ENCODE measurements at regions of chr10 and their contacts with region 1.

Region 1: GRCh38 chr10:4498711-4499251 is 327.2 kb upstream of the AKR1E2 start:
- DNase-seq: peak in 1 of 2 donors; percentile 23
- ATAC-seq: peak; percentile 77 to 93 (median 90)
- H3K4me3 ChIP-seq: no peak overlapping the region
- H3K27ac ChIP-seq: peak overlapping the region; percentile 14 to 90 (median 78)
- H3K4me1 ChIP-seq: peaks cover 5 to 24% (median 14%) of the 10 kb centered on the region in 9 donors
- H3K27me3 ChIP-seq: no peaks in the 10 kb centered on the region
- CTCF ChIP-seq: no peak

Region 2: GRCh38 chr10:4344511-4344994 is 154.2 kb before region 1 on chr10:
- intact Hi-C with region 1: loop called in 1 of 10 experiments (anchors 10 kb)
- DNase-seq: peak; percentile 39 to 72
- ATAC-seq: peak; percentile 78 to 99 (median 92)
- H3K4me3 ChIP-seq: peak overlapping the region in 1 of 10 donors; percentile 2
- H3K27ac ChIP-seq: peak overlapping the region; percentile 37 to 85 (median 68)
- H3K4me1 ChIP-seq: peaks cover 2 to 34% (median 24%) of the 10 kb centered on the region in 9 donors
- H3K27me3 ChIP-seq: no peaks in the 10 kb centered on the region
- CTCF ChIP-seq: peak in 4 of 9 donors; percentile 21 to 37 (median 34)